ENCODE measurements at regions of chr10 and their contacts with region 1.

Region 1: DNA sequence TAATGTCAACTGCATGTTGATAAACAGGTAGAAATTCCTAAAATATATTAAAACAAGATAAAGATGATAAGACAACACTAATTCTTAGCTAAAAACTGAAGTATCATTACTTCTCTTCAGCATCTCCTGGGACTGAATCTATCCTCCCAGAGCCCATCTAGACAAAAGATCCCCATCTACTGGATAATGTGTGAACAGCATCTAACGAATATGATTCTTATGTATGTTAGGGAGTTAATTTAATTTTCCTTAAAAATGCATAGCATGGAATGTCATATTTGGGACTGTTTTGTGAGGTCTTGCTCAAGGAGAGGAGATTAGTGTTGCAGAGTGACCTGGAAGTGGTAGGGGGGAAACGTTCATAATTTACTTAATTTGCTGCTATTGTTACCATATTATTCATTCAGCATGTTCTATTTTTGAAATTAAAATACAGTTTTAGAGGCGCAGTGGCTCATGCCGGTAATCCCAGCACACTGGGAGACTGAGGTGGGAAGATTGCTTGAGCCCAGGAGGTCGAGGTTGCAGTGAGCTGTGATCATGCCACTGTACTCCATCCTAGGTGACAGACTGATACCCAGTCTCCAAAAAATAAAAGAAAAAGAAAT is 305.1 kb upstream of the CSTF2T start:
- DNase-seq: no peak
- ATAC-seq: no peak
- H3K4me3 ChIP-seq: no peak overlapping the region
- H3K4me3 Mint-ChIP-seq: no peak overlapping the region
- H3K27ac ChIP-seq: no peak overlapping the region
- H3K27ac Mint-ChIP-seq: no peak overlapping the region
- H3K4me1 ChIP-seq: no peaks in the 10 kb centered on the region
- H3K4me1 Mint-ChIP-seq: no peaks in the 10 kb centered on the region
- H3K27me3 ChIP-seq: no peaks in the 10 kb centered on the region
- H3K27me3 Mint-ChIP-seq: peaks cover 0 to 7% (median 5%) of the 10 kb centered on the region in 5 donors

Region 2: GRCh38 chr10:51001587-51001986 is 1002.9 kb before region 1 on chr10:
- CTCF ChIA-PET with region 1: no interaction called
- POLR2A ChIA-PET with region 1: no interaction called
- intact Hi-C with region 1: loop called in 1 of 2 experiments (anchors 1 kb)
- DNase-seq: peak in 4 of 9 donors; percentile 4 to 12 (median 6)
- ATAC-seq: no peak
- H3K4me3 ChIP-seq: no peak overlapping the region
- H3K4me3 Mint-ChIP-seq: no peak overlapping the region
- H3K27ac ChIP-seq: no peak overlapping the region
- H3K27ac Mint-ChIP-seq: no peak overlapping the region
- H3K4me1 ChIP-seq: no peaks in the 10 kb centered on the region
- H3K4me1 Mint-ChIP-seq: no peaks in the 10 kb centered on the region
- H3K27me3 ChIP-seq: no peaks in the 10 kb centered on the region
- H3K27me3 Mint-ChIP-seq: peaks cover 7 to 16% (median 11%) of the 10 kb centered on the region in 5 donors

Region 3: GRCh38 chr10:51389415-51390321 is 614.8 kb before region 1 on chr10:
- CTCF ChIA-PET with region 1: no interaction called
- POLR2A ChIA-PET with region 1: no interaction called
- intact Hi-C with region 1: loop called in 1 of 2 experiments (anchors 1 kb)
- DNase-seq: peak in 6 of 9 donors; percentile 1 to 38 (median 10)
- ATAC-seq: no peak
- H3K4me3 ChIP-seq: no peak overlapping the region
- H3K4me3 Mint-ChIP-seq: no peak overlapping the region
- H3K27ac ChIP-seq: no peak overlapping the region
- H3K27ac Mint-ChIP-seq: no peak overlapping the region
- H3K4me1 ChIP-seq: no peaks in the 10 kb centered on the region
- H3K4me1 Mint-ChIP-seq: no peaks in the 10 kb centered on the region
- H3K27me3 ChIP-seq: no peaks in the 10 kb centered on the region
- H3K27me3 Mint-ChIP-seq: peaks cover 0 to 1% (median 0%) of the 10 kb centered on the region in 5 donors

Measured in naive thymus-derived CD4-positive, alpha-beta T cell (primary cell).